ENCODE measurements at regions of chr1 and their contacts with region 1.

Region 1: GRCh38 chr1:204806943-204807687 is 63.5 kb upstream of the NFASC start:
- DNase-seq: peak; percentile 75 to 76
- H3K4me3 ChIP-seq: peak overlapping the region in 1 of 3 donors; percentile 21
- H3K27ac ChIP-seq: no peak overlapping the region
- H3K4me1 ChIP-seq: no peaks in the 10 kb centered on the region
- H3K27me3 ChIP-seq: no peaks in the 10 kb centered on the region
- CTCF ChIP-seq: peak; percentile 93 to 99 (median 96)
- POLR2A ChIP-seq: no peak

Region 2: GRCh38 chr1:204619721-204620120 is 187.4 kb before region 1 on chr1:
- intact Hi-C with region 1: no loop called
- DNase-seq: no peak
- H3K4me3 ChIP-seq: no peak overlapping the region
- H3K27ac ChIP-seq: no peak overlapping the region
- H3K4me1 ChIP-seq: no peaks in the 10 kb centered on the region
- H3K27me3 ChIP-seq: no peaks in the 10 kb centered on the region
- CTCF ChIP-seq: no peak
- POLR2A ChIP-seq: no peak

Region 3: DNA sequence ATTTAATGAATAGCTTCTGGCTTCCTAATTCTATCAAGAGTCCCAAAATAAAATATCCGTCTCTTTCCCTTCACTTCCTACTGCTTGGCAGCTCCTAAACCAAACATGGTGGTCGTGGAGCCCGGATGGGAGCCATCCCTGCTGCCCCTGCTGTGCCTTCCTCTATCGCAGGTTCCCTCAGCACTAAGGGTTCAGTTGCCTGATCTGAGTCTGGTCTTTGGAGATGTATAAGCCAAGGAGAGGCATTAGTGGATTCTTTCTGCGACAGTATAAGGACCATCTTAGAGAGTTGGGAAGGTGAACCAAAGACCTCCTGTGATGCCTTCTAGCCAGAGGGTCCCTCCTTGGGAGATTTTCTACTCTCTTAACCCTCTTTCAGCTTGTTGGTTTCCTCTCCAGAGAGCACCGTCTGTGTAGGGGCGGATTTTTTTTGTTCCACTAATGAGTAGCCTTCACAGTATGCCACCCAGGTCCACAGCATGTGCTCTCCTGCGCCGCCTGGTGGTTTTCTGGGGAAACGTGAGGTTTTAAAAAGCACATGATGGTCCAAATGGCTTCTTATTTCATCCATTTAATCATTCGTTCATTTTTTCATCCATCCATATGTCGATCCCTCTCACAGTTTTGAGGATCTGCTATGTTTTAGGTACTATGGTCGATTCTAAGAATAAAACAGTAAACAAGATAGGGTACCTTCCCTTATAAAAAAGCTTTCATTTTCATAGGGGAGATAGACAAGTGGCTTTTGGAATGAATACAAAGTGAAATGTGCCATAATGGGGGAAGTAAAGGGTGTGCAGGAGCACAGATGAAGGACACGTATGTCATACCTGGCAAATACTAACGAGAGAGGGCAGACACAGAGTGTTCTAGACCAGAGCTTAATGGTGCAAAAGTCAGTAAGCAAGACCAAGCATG is 134.6 kb after region 1 on chr1:
- intact Hi-C with region 1: loop called (anchors 10 kb)
- DNase-seq: peak; percentile 48 to 67
- H3K4me3 ChIP-seq: no peak overlapping the region
- H3K27ac ChIP-seq: no peak overlapping the region
- H3K4me1 ChIP-seq: no peaks in the 10 kb centered on the region
- H3K27me3 ChIP-seq: no peaks in the 10 kb centered on the region
- CTCF ChIP-seq: peak; percentile 62 to 93 (median 76)
- POLR2A ChIP-seq: no peak